ENCODE measurements at regions of chr4 and their contacts with region 1.

Region 1: DNA sequence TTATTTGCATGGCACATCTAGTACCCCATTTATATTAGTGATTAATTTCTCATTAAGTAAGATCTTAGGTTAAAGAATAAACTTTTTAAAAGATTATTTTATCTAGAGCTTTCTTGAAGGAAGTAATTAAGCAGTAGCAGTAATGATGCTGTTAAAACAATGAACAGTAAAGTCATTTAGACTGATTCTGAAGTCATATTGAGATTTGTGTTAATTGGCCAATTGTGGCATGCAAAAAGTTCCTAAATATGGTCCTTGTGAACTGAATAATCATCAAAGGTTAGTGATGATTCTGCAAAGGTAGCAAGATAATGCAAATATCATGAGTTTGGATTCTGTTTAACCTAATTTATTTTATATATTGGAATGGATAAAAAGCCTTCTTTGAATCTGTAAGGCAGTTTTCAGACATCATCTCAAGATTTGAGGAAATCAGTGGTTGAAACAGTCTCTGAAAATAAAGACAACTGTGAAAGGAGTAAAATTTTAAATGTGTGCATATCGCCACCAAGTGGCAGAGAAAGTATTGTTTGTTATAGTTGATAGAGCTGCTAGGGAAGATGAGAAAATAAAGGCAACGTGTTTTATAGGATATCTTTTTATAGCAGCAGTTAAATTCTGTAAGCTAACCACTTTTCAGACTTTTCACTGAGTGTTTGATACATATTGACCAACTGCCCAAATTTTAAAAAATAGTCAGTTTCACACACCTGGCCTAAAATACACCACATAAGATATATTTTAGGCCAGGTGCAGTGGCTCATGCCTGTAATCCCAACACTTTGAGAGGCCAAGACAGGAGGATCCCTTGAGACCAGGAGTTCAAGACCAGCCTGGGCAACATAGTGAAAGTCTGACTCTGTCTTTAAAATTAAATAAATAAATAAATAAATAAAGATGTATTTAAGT is 79.6 kb downstream of the CCKAR start:
- DNase-seq: peak in 1 of 2 donors; percentile 63
- ATAC-seq: peak in 4 of 8 donors; percentile 34 to 71 (median 56)
- H3K4me3 ChIP-seq: no peak overlapping the region
- H3K27ac ChIP-seq: no peak overlapping the region
- H3K4me1 ChIP-seq: peaks cover 4 to 29% (median 17%) of the 10 kb centered on the region in 9 donors
- H3K27me3 ChIP-seq: no peaks in the 10 kb centered on the region
- CTCF ChIP-seq: peak; percentile 38 to 79 (median 70)

Region 2: DNA sequence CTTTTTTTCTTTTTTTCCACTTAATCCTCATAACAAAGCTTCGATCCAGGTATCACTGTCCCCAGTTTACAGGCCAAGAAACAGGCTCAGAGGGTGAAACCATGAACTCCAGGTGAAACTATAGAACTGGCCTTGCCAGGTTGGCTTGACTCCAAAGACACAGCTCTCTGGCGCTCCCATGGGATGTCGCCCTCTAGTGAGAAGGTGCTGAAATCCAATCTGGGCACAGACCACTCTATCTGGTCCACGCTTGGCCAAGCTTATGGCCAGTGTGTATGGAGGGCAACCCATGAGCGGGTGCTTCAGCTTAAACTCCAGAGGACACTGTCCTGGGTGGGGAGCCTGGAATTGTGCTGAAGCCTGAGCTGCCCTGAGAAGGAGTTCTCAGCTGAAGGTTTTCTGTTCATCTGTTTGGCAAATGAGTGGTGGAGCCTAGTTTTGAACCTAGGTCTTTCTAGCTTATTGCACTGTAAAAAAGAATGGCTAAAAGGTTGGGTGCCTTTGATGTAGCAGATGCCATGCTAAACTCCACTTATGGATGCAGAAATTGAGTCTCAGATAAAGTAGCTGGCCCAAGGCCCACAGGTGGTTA is 618.3 kb before region 1 on chr4:
- intact Hi-C with region 1: no loop called
- DNase-seq: no peak
- ATAC-seq: peak in 1 of 8 donors; percentile 44
- H3K4me3 ChIP-seq: no peak overlapping the region
- H3K27ac ChIP-seq: no peak overlapping the region
- H3K4me1 ChIP-seq: no peaks in the 10 kb centered on the region
- H3K27me3 ChIP-seq: no peaks in the 10 kb centered on the region
- CTCF ChIP-seq: peak in 8 of 9 donors; percentile 7 to 54 (median 38)

Region 3: DNA sequence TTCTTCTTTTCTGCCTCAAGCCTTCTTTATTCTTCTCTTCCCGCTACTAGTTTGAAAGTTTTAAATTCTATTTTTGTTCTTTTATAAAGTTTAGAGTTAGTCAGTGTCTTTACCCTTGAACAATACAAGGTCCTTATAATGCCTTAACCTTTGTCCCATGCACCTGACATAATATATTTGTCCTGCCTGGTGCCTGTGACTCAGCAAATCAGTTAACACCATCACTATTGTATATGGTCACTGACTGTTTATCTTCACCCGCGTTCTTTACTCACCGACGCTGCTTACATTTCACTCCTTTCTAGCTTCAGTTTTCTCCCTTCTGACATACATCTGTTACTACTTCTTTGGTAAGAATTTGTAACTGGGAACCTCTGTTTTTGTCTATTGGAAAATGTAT is 491.0 kb before region 1 on chr4:
- intact Hi-C with region 1: loop called in 4 of 10 experiments (anchors 5 to 10 kb)
- DNase-seq: no peak
- ATAC-seq: no peak
- H3K4me3 ChIP-seq: no peak overlapping the region
- H3K27ac ChIP-seq: no peak overlapping the region
- H3K4me1 ChIP-seq: peaks cover 0 to 46% (median 32%) of the 10 kb centered on the region in 9 donors
- H3K27me3 ChIP-seq: no peaks in the 10 kb centered on the region
- CTCF ChIP-seq: no peak

Region 4: GRCh38 chr4:25981749-25982148 is 428.9 kb before region 1 on chr4:
- intact Hi-C with region 1: loop called in 6 of 10 experiments (anchors 5 to 10 kb)
- DNase-seq: peak; percentile 39 to 41
- ATAC-seq: peak in 6 of 8 donors; percentile 73 to 96 (median 94)
- H3K4me3 ChIP-seq: no peak overlapping the region
- H3K27ac ChIP-seq: peak overlapping the region in 1 of 10 donors; percentile 44
- H3K4me1 ChIP-seq: peaks cover 0 to 7% (median 0%) of the 10 kb centered on the region in 9 donors
- H3K27me3 ChIP-seq: no peaks in the 10 kb centered on the region
- CTCF ChIP-seq: no peak

Region 5: GRCh38 chr4:25993395-25994185 is 417.0 kb before region 1 on chr4:
- intact Hi-C with region 1: loop called in 8 of 10 experiments (anchors 2 to 10 kb)
- DNase-seq: peak; percentile 32 to 35
- ATAC-seq: peak; percentile 46 to 82 (median 68)
- H3K4me3 ChIP-seq: no peak overlapping the region
- H3K27ac ChIP-seq: peak overlapping the region in 3 of 10 donors; percentile 8 to 35 (median 22)
- H3K4me1 ChIP-seq: peaks cover 0 to 23% (median 0%) of the 10 kb centered on the region in 9 donors
- H3K27me3 ChIP-seq: no peaks in the 10 kb centered on the region
- CTCF ChIP-seq: peak in 6 of 9 donors; percentile 24 to 41 (median 34)

Region 6: DNA sequence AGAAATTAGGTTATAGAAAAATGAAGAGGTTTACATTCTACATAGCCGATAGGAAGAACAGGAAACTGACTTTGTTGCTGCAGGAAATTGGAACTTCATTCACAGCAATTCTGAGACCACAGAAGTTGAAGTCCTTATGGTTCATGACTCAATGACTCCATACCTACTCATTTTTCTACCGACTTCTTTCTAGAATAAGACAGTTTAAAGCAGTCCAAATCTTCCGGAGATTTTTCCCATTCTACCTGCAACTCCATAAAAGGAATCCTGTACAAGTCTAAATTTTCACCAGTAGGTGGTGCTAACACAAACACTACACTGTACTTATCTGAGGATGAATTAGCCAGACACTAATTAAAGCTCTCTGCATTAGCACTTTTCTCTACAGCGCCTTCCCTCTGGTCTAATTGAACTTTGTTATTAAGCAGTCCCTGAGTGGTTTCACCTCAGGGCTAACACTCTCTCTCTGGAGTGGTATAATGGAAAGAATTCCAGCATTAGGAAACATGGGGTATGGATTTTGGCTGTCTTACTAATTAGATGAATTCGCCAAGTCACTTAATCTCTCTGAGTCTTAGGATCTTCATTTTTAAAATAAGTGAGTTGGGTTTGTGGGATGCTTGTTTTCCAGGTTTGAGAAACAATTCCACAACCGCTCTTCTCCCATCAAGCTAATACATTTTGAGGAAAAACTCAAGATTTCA is 328.7 kb before region 1 on chr4:
- intact Hi-C with region 1: loop called in 8 of 10 experiments (anchors 1 to 10 kb)
- DNase-seq: no peak
- ATAC-seq: peak in 7 of 8 donors; percentile 44 to 66 (median 53)
- H3K4me3 ChIP-seq: no peak overlapping the region
- H3K27ac ChIP-seq: peak overlapping the region in 1 of 10 donors; percentile 34
- H3K4me1 ChIP-seq: peaks cover 0 to 52% (median 0%) of the 10 kb centered on the region in 9 donors
- H3K27me3 ChIP-seq: peaks cover 0 to 11% (median 2%) of the 10 kb centered on the region in 7 donors
- CTCF ChIP-seq: peak; percentile 60 to 82 (median 72)

Region 7: GRCh38 chr4:26330186-26330787 is 80.4 kb before region 1 on chr4:
- intact Hi-C with region 1: loop called in 9 of 10 experiments (anchors 1 to 10 kb)
- DNase-seq: no peak
- ATAC-seq: peak in 5 of 8 donors; percentile 66 to 78 (median 76)
- H3K4me3 ChIP-seq: no peak overlapping the region
- H3K27ac ChIP-seq: peak overlapping the region in 1 of 10 donors; percentile 5
- H3K4me1 ChIP-seq: peaks cover 0 to 82% (median 26%) of the 10 kb centered on the region in 9 donors
- H3K27me3 ChIP-seq: no peaks in the 10 kb centered on the region
- CTCF ChIP-seq: peak; percentile 48 to 76 (median 69)

Region 8: GRCh38 chr4:26388671-26389070 is 22.0 kb before region 1 on chr4:
- intact Hi-C with region 1: no loop called
- DNase-seq: no peak
- ATAC-seq: no peak
- H3K4me3 ChIP-seq: no peak overlapping the region
- H3K27ac ChIP-seq: no peak overlapping the region
- H3K4me1 ChIP-seq: peaks cover 0 to 22% (median 0%) of the 10 kb centered on the region in 9 donors
- H3K27me3 ChIP-seq: no peaks in the 10 kb centered on the region
- CTCF ChIP-seq: no peak